Natural killer cell (primary cell): ENCODE measurements at regions of chr21 and their contacts with region 1.

Region 1: DNA sequence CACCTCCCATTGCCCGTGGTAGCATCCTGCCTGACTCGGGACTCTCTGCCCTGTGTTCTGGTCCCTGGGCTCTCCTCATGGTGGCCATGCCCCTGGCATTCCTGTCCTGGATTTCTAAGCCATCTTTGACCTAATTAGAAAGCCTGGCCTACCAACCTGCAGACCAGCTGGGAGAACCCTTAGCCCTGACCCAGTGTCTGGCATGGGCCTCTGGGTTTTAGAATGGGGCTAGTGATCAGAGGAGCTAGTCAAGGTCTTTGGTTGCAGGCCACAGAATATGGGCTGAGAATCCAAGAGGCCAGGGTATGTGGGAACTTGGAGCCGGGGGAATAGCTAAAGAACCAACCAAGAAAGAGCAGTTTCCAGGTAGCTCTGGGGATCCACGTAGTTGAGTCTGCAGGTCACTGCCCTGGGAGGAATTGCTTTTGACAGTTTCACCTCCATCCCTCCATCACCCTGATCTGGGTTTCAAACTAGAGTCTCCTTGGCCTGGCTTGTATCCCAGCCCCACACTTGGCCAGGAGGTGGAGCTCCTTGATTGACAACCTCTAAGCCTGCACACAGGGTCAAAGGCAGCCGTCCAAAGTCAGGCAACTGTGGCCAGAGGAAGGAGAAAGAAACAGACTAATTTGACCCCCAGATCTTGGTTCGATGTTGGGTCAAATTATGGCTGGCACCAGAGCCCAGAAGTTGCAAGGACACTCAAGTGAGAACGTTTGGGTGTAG is 54.7 kb upstream of the ABCG1 start:
- DNase-seq: peak; percentile 50 to 77
- ATAC-seq: peak; percentile 61 to 81 (median 64)
- H3K4me3 ChIP-seq: no peak overlapping the region
- H3K4me3 Mint-ChIP-seq: no peak overlapping the region
- H3K27ac ChIP-seq: no peak overlapping the region
- H3K27ac Mint-ChIP-seq: no peak overlapping the region
- H3K4me1 ChIP-seq: peaks cover 23% of the 10 kb centered on the region
- H3K4me1 Mint-ChIP-seq: peaks cover 10 to 52% of the 10 kb centered on the region in 2 donors
- H3K27me3 ChIP-seq: no peaks in the 10 kb centered on the region
- H3K27me3 Mint-ChIP-seq: peaks cover 3 to 8% of the 10 kb centered on the region in 2 donors
- CTCF ChIP-seq: peak; percentile 60

Region 2: DNA sequence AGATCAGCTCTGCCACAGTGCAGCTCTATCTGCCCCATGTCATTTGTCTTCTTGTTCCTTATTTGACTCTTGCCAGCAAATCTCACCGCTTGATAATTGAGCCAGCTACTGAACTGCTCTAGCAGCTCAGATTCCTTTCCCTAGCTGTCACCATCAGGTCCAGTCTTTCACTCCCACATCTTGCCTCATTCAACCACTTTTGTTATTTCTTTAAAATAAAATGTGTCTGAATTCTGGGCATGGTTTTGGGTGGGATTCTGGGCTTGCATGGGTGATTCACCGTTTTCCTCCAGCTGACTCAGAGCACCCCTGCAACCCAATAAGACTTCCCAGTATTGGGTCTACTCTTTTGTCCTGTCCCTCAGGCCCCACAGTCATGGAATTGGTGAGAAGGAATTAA is 1533.0 kb before region 1 on chr21:
- intact Hi-C with region 1: no loop called
- DNase-seq: no peak
- ATAC-seq: no peak
- H3K4me3 ChIP-seq: no peak overlapping the region
- H3K4me3 Mint-ChIP-seq: no peak overlapping the region
- H3K27ac ChIP-seq: no peak overlapping the region
- H3K27ac Mint-ChIP-seq: no peak overlapping the region
- H3K4me1 ChIP-seq: no peaks in the 10 kb centered on the region
- H3K4me1 Mint-ChIP-seq: no peaks in the 10 kb centered on the region
- H3K27me3 ChIP-seq: no peaks in the 10 kb centered on the region
- H3K27me3 Mint-ChIP-seq: no peaks in the 10 kb centered on the region
- CTCF ChIP-seq: no peak

Region 3: DNA sequence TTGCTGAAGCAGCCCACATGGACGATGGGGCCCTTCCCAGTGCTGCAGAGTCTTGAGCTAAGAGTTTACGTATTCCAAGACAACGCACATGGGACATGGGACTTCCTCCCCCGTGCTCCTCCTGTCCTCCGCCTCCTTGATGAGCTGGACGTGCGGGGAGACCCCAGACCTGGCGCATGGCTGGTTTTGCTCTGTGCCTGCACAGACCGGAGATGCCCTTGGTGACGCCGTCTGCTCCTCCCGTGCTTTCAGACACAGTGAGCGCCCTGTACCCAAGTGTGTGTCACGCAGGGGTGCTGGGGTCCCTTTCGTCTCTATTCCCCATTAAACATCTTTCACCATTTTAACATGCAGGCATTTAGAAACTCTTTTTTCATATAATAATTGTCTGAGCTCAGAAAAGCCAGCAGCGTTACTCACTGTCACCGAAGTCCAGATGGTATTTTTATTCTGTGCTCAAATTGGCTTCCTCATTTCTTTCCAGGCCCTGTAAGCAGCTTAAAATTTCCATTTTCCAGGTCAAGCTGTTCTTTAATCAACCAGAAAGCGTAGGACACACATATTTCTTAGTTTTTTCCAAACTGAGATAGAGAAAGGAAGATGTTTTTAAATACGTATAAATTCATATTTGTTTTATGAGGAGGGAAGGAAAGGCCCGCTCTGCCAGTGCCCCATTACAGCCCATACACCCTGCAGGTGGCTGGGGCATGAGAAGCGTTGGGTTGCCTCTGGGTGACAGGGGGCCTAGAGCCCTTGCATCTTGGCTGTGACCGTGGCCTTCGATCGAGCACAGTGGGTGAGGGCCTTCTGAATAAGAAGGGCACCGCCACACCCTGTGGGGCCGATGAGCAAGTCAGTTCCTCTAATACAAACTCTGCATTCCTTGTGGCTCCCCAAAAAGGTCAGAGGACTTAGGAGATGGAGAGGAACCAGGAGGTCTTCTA is 136.1 kb before region 1 on chr21:
- intact Hi-C with region 1: no loop called
- DNase-seq: no peak
- ATAC-seq: no peak
- H3K4me3 ChIP-seq: no peak overlapping the region
- H3K4me3 Mint-ChIP-seq: no peak overlapping the region
- H3K27ac ChIP-seq: no peak overlapping the region
- H3K27ac Mint-ChIP-seq: no peak overlapping the region
- H3K4me1 ChIP-seq: no peaks in the 10 kb centered on the region
- H3K4me1 Mint-ChIP-seq: peaks cover 0 to 6% of the 10 kb centered on the region in 2 donors
- H3K27me3 ChIP-seq: no peaks in the 10 kb centered on the region
- H3K27me3 Mint-ChIP-seq: peaks cover 18 to 21% of the 10 kb centered on the region in 2 donors
- CTCF ChIP-seq: no peak

Region 4: DNA sequence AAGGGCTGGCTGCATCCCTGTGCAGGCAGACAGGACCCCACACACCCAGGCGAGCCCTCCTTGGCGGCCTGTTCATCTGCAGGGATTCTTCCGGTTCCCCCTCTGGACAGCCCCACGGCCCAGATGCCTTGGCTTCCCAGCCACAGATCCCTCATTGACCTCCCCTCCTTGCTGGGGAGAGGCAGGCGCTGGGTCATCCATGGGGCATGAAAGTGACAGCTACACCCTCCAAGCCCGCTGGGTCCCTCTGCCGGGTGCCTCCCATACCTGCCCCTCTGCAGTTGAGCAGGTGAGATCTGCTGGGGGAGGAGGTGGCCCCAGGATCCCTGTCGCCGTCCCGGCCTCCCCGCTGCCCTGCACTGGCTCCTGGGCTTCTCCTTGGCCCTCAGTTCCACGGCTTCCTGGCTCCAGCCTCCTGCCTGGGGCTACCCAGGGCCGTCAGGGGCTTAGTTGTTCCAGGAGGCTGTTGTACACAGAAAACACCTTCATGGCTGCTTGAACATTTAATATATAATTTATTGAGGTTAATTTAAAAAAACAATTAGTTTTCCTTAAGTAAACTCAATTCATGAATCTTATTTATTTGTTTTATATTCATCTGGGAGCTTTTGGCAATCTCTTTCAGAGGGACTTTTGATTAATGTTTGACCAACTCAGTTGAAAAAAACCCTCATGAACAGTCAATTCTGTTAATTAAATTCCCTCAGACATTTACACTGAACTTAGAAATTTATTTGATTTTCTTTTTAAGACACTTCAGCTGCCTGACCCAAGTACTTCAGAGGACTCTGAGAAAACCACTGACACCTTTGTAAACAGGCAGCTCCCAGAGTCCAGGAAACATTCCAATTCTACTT is 12.9 kb before region 1 on chr21:
- intact Hi-C with region 1: loop called (anchors 1 kb)
- DNase-seq: peak in 1 of 2 donors; percentile 12
- ATAC-seq: no peak
- H3K4me3 ChIP-seq: no peak overlapping the region
- H3K4me3 Mint-ChIP-seq: no peak overlapping the region
- H3K27ac ChIP-seq: no peak overlapping the region
- H3K27ac Mint-ChIP-seq: no peak overlapping the region
- H3K4me1 ChIP-seq: peaks cover 22% of the 10 kb centered on the region
- H3K4me1 Mint-ChIP-seq: peaks cover 25 to 27% of the 10 kb centered on the region in 2 donors
- H3K27me3 ChIP-seq: no peaks in the 10 kb centered on the region
- H3K27me3 Mint-ChIP-seq: peaks cover 3 to 7% of the 10 kb centered on the region in 2 donors
- CTCF ChIP-seq: no peak

Region 5: DNA sequence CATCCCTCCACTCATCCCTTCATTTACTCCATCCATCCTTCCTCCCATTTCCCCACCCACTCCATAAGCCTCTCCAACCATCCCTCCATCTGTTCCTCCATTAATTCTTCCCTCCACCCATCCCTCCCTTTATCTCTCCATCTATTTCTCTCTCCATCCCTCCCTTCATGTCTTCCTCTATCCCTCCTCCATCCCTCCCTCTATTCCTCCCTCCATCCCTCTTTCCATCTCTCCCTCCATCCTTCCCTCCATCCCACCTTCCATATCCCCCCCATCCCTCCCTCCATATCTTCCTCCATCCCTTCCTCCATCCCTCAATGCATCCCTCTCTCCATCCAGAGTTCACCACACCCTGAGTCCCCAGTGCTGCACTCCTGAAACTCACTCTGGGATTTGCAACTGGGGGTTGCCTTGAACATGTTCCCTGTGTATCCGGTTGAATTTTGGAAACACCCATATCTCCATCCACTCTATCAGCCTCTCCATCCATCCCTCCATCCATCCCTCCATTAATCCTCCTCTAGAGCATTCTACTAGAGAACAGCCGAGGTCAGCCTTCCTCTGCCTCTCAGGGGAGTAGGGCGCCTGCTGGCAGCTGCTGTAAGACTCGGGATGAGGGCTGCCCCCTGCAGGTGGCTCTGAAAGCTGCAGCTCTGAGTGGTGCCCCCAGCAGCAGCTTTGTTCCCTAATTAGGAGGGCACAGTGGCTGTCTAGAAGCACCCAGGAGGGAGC is 94.1 kb after region 1 on chr21:
- intact Hi-C with region 1: loop called (anchors 1 kb)
- DNase-seq: peak; percentile 81 to 90
- ATAC-seq: peak; percentile 86 to 100 (median 97)
- H3K4me3 ChIP-seq: no peak overlapping the region
- H3K4me3 Mint-ChIP-seq: no peak overlapping the region
- H3K27ac ChIP-seq: no peak overlapping the region
- H3K27ac Mint-ChIP-seq: peak overlapping the region in 1 of 2 donors; percentile 59
- H3K4me1 ChIP-seq: peaks cover 25% of the 10 kb centered on the region
- H3K4me1 Mint-ChIP-seq: peaks cover 6 to 27% of the 10 kb centered on the region in 2 donors
- H3K27me3 ChIP-seq: no peaks in the 10 kb centered on the region
- H3K27me3 Mint-ChIP-seq: peaks cover 3 to 6% of the 10 kb centered on the region in 2 donors
- CTCF ChIP-seq: peak; percentile 89